Posterior vena cava (tissue), 2 donors: ENCODE measurements at regions of chr10 and their contacts with region 1.

Region 1: DNA sequence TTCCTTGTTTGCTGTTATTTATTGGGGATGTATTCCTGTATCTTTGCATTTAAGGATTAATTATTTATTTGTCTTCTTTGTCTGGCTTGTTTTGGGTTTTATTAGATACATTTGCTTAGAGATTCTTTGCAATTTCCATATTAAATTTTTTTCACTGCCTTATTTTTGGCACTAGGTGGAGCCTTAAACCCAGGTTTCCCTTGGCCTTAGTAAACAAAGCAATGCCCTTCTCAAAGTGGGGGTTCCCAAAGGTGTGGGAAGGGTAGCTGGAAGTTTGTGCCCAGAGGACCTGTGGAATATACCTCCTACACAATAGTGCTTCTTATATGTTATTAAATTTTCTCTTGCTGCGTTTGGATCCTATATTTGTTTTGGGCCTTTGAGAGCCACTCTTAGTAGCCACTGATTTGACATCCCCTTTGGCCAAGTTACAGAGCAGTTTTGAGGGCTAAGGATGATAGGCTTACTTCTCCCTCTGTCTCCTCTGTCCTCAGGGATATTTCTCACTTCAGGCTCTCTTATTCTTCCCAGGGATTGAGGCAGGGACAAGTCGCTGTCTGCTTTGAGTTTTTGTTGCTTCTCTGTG is 162.3 kb downstream of the ITGB1 start:
- DNase-seq: no peak

Region 2: GRCh38 chr10:33008499-33009243 is 213.0 kb after region 1 on chr10:
- intact Hi-C with region 1: loop called (anchors 2 to 10 kb)
- DNase-seq: no peak

Region 3: DNA sequence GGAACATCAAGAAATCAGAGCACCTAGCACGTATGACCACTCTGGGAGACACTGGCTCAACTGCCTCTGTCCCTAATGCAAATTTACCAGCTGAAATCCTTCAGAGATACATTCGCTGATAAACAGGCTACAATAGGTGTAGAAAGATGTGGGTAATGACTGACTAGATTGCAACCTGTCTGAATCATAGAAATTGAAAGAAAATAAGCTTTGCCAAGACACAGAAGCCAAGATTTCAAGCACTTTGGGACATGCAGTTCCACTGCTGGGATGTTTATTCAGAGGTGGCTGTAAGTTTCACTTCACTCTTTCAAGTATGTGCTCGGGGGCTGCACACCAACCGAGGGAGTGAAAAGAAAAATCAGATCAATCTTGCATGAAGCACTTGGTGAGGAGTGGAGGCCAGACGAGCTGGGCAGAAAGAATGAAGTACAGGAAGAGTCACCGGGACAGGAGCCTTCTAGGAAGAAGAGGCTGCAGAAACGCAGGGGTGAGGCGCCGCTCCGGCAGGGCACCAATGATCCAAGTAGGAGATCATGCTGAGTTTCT is 1742.7 kb after region 1 on chr10:
- intact Hi-C with region 1: loop called in 1 of 2 experiments (anchors 10 kb)
- DNase-seq: no peak